Body of pancreas (tissue), 4 donors: ENCODE measurements at regions of chrX and their contacts with region 1.

Region 1: DNA sequence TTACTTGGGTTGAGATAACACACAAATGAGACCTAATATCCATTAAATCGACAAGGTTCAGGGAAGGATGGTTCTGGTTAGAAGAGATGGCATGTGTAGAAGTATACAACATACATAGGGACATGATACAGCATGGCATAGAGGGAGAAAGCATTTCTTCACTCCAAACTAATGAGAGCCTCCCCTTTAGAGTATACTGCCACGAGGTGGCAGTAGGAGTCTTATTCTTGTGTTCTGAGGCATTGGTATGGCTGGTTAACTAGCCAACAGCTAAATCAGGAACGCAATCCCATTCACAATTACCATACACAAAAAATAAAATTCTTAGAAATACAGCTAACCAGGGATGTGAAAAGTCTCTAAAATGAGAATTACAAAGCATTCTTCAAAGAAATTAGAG is 29.1 kb upstream of the TRO start:
- DNase-seq: peak; percentile 19 to 52 (median 35)
- ATAC-seq: no peak
- H3K4me3 ChIP-seq: no peak overlapping the region
- H3K27ac ChIP-seq: no peak overlapping the region
- H3K4me1 ChIP-seq: no peaks in the 10 kb centered on the region
- H3K27me3 ChIP-seq: peaks cover 0 to 3% of the 10 kb centered on the region in 2 donors
- CTCF ChIP-seq: peak; percentile 9 to 55 (median 43)
- POLR2A ChIP-seq: no peak

Region 2: GRCh38 chrX:55057675-55058249 is 166.2 kb after region 1 on chrX:
- intact Hi-C with region 1: loop called (anchors 10 kb)
- DNase-seq: peak; percentile 14 to 52 (median 27)
- ATAC-seq: peak; percentile 70
- H3K4me3 ChIP-seq: no peak overlapping the region
- H3K27ac ChIP-seq: no peak overlapping the region
- H3K4me1 ChIP-seq: no peaks in the 10 kb centered on the region
- H3K27me3 ChIP-seq: no peaks in the 10 kb centered on the region
- CTCF ChIP-seq: peak; percentile 51 to 83 (median 69)
- POLR2A ChIP-seq: no peak

Region 3: DNA sequence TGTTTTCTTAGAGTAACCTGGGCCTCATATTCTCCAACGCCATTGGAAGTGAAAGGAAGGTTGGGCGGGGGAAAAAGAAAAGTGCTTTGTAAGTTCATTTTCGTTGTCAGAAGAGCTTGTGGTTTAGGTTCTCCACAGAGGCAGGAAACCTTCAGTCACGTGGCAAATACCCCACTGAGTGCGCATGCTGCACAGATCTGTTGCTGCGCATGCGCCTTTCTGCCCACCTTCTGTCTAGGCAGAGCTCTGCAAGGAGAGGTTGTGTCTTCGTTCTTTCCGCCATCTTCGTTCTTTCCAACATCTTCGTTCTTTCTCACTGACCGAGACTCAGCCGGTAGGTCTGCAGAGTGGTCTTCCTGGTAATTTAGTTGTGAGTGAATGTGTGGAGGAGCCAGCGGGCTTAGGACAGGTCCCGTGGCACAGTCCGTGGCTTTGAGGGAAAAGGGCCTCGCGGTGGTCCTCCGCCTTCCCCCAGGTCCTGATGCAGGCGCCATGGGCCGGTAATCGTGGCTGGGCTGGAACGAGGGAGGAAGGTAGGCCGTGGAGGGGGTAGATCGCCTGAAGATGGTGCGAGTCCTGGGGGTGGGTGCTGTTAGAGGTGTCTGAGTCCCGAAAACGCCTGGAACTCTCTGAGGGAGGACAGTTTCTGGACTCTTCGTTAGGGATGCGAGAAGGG is 328.7 kb after region 1 on chrX and contains the start of gene PAGE5:
- intact Hi-C with region 1: no loop called
- DNase-seq: no peak
- ATAC-seq: no peak
- H3K4me3 ChIP-seq: no peak within 1 kb of the TSS
- H3K27ac ChIP-seq: no peak within 1 kb of the TSS
- H3K4me1 ChIP-seq: no peaks in the 10 kb centered on the region
- H3K27me3 ChIP-seq: no peaks in the 10 kb centered on the region
- CTCF ChIP-seq: no peak
- POLR2A ChIP-seq: no peak
- total RNA-seq, gene PAGE5: not detected